Activated B cell treated with CpG ODN at 0.5 μM for 24 hours (primary cell): ENCODE measurements at regions of chr21 and their contacts with region 1.

Region 1: GRCh38 chr21:44801468-44802395 is at the start of gene UBE2G2:
- DNase-seq: peak; percentile 92
- ATAC-seq: peak; percentile 95
- H3K4me3 Mint-ChIP-seq: peak within 1 kb of the TSS; percentile 99
- H3K27ac Mint-ChIP-seq: peak within 1 kb of the TSS; percentile 91
- H3K4me1 Mint-ChIP-seq: peaks cover 41% of the 10 kb centered on the region
- H3K27me3 Mint-ChIP-seq: no peaks in the 10 kb centered on the region
- CTCF ChIP-seq: no peak
- total RNA-seq, gene UBE2G2: 102 and 108 TPM in 2 replicates

Region 2: DNA sequence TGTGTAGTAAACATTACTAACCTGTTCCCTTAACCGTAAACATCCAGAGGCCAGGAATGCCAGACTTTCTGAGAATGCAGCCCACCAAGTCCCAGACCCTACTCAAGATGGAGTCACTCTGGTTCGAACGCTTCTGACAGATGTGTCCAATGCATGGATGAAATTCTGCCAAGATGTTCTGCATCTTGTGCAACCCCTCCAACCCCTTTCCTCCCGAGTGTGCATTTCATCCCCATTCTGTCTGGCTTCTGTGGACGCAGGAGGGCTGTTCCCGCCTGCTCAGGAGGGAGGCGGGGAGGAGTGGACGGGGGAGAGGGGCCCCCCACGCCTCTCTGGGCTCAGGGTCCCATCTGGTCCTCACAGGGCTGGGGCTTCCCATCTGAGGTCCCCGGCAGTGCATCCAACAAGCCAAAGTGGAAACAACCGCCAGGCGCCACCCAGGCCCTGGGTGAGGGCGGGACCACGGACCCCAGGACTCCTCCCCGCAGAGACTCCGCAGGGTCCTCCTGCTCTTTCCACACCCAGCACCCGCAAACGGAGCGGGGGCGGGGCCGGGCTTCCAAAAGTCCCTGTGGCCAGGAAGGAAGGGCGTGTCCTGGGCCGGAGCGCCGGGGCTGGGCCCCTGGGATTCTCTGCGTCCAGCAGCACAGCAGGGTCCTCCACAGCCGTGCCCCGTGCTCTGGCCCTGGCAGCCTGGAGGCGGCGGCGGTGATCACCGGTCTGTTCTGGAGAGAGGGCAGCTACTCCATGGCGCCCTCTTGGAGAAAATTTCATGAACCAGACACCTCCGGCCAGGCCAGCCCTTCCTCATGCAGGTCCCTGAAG is 43.9 kb after region 1 on chr21:
- CTCF ChIA-PET with region 1: no interaction called
- POLR2A ChIA-PET with region 1: no interaction called
- intact Hi-C with region 1: loop called (anchors 1 kb)
- DNase-seq: peak; percentile 26
- ATAC-seq: peak; percentile 67
- H3K4me3 Mint-ChIP-seq: peak overlapping the region; percentile 52
- H3K27ac Mint-ChIP-seq: no peak overlapping the region
- H3K4me1 Mint-ChIP-seq: peaks cover 15% of the 10 kb centered on the region
- H3K27me3 Mint-ChIP-seq: peaks cover 24% of the 10 kb centered on the region
- CTCF ChIP-seq: no peak

Region 3: DNA sequence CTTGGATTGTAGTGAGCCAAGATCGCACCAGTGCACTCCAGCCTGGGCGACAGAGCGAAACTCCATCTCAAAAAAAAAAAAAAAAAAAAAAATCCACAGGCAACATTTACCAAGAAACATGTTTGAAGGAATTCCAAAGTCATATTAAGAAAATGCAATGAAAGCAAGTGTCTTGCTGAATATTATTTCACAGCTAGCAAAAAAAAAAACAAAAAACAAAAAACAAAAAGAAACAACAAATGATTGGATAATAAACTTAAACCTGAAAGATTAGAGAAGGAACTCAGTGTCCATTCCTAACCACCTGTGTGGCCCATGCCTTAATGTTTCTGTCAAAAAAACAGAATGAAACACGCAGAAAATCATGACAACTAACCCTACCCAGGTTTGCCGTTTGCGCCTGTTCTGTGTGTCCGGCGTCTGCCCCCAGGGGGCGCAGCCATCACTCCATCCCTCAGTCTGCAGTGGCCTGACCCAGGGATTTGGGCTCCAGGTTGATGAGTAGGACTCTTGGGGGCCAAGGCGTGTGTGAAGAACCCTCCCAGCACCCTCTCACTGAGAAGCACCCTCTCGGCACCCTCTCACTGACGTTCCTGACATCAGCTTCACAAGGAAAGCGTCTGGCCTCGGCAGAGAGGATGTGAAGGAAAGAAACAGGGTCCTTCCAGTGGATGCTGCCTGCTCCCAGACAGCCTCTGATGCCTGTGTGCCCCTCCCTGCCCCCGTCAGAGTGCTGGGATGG is 91.0 kb after region 1 on chr21:
- CTCF ChIA-PET with region 1: interaction called, 5 read pairs
- POLR2A ChIA-PET with region 1: no interaction called
- intact Hi-C with region 1: loop called (anchors 1 kb)
- DNase-seq: peak; percentile 73
- ATAC-seq: peak; percentile 85
- H3K4me3 Mint-ChIP-seq: no peak overlapping the region
- H3K27ac Mint-ChIP-seq: no peak overlapping the region
- H3K4me1 Mint-ChIP-seq: peaks cover 24% of the 10 kb centered on the region
- H3K27me3 Mint-ChIP-seq: no peaks in the 10 kb centered on the region
- CTCF ChIP-seq: peak; percentile 98

Region 4: DNA sequence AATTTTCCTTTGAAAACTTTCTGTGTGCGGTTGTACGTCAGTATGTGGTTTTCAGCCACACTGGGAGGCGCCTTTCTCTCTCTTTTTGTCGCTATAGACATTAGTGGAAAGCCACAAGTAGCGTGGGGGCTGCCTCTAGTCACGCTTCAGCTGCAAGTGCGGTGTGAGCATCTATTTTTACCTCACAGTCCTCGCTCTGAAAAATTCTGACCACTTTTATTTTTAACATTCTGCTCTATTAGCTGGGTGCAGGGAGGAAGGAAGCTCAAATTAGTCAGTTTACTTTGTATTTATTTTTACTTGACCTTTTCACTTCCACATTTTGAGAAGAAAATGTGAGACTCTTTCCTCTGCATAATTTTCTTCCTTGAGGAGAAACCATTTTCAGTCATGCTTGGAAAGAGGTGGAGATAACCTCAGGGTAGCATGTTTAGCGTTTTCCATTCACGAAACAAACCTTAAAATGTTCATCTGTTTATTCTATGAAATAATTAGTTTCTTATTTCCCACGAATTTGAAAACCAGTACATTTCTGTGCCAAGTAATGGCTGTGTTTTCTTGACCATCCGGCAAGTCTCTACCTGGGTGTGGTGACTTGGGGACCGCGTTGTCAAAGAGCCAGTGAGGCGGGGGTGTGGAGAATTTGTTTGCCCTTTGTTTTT is 308.2 kb after region 1 on chr21:
- CTCF ChIA-PET with region 1: no interaction called
- POLR2A ChIA-PET with region 1: no interaction called
- intact Hi-C with region 1: loop called (anchors 5 kb)
- DNase-seq: peak; percentile 55
- ATAC-seq: peak; percentile 84
- H3K4me3 Mint-ChIP-seq: peak overlapping the region; percentile 82
- H3K27ac Mint-ChIP-seq: peak overlapping the region; percentile 90
- H3K4me1 Mint-ChIP-seq: peaks cover 99% of the 10 kb centered on the region
- H3K27me3 Mint-ChIP-seq: no peaks in the 10 kb centered on the region
- CTCF ChIP-seq: no peak

Region 5: DNA sequence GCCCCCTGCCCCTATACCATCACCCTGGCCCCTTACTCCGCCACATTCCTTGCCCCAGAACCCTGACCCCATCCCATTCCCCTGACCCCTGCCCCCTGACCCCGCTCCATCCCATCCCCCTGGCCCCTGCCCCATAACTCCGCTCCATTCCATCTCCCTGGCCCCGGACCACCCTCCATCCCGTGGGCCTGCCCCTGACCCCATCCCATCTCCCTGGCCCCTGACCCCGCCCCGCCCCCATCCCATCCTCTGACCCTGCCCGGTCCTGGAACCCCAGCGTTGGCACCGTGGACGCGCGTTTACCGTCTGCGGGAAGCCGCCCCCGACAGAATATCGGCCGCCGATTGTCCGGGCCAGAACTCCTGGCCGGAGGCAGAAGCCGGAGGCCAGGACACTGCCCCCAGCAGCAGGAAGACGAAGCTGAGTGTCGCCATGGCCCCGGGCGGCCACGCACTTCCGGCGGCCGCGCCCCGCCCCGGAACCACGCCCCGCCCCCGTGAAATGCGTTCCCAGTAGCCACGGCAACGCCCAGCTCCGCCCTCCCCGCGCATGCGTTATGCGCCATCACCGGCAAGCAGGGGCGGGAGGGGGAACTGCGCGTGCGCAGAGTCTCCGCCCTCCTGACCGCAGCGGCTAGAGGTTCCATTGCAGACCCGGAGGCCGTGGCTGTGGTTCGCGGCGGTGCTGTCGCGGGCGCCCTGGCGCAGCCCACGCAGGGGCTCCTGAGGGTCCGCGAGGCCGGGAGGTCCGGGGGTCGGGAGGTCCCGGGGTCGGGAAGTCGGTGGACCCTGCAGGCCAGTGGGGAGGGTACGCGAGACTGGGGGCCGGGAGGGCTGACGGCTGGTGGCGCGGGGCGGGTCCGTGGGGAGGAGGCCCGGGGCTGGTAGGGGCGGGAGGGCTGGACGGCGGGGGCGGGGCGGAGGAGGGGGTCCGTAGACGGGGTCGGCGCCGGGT is 486.0 kb after region 1 on chr21 and contains the start of gene POFUT2:
- CTCF ChIA-PET with region 1: no interaction called
- POLR2A ChIA-PET with region 1: no interaction called
- intact Hi-C with region 1: no loop called
- DNase-seq: peak; percentile 99
- ATAC-seq: peak; percentile 85
- H3K4me3 Mint-ChIP-seq: peak within 1 kb of the TSS; percentile 88
- H3K27ac Mint-ChIP-seq: peak within 1 kb of the TSS; percentile 87
- H3K4me1 Mint-ChIP-seq: peaks cover 19% of the 10 kb centered on the region
- H3K27me3 Mint-ChIP-seq: no peaks in the 10 kb centered on the region
- CTCF ChIP-seq: no peak
- total RNA-seq, gene POFUT2: 19.3 and 21.4 TPM in 2 replicates